ENCODE measurements at regions of chrX and their contacts with region 1.

Region 1: DNA sequence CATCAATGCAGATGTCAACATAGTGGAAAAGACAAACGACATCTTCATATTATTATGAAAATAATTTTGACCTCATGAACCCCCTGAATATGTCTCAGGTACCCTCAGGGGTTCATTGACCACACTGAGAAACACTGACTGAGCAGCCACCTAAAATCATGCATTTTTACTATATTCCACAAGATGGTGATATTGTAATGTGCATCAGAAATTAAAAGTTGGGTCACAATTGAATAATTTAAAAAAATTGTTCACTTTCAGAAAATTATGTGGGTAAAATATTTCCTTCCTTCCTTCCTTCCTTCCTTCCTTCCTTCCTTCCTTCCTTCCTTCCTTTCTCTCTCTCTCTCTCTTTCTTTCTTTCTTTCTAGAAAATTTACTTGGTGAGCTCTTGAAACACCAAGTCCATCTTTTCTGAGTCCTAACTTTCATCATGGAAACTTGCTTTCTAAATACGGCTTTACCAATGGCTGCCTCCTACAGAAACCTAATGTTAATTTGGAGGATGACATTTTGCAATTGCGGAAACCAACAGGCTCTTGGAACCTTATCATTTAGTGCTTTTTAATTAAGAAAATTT is 103.6 kb downstream of the RTL3 start:
- DNase-seq: no peak
- H3K4me3 Mint-ChIP-seq: no peak overlapping the region
- H3K27ac Mint-ChIP-seq: no peak overlapping the region
- H3K4me1 Mint-ChIP-seq: peaks cover 4% of the 10 kb centered on the region
- H3K27me3 Mint-ChIP-seq: no peaks in the 10 kb centered on the region

Region 2: GRCh38 chrX:78527263-78527662 is 28.2 kb before region 1 on chrX:
- CTCF ChIA-PET with region 1: no interaction called
- DNase-seq: no peak
- H3K4me3 Mint-ChIP-seq: no peak overlapping the region
- H3K27ac Mint-ChIP-seq: no peak overlapping the region
- H3K4me1 Mint-ChIP-seq: peaks cover 6% of the 10 kb centered on the region
- H3K27me3 Mint-ChIP-seq: no peaks in the 10 kb centered on the region

Region 3: GRCh38 chrX:78592030-78592429 is 36.5 kb after region 1 on chrX:
- CTCF ChIA-PET with region 1: no interaction called
- DNase-seq: no peak
- H3K4me3 Mint-ChIP-seq: no peak overlapping the region
- H3K27ac Mint-ChIP-seq: no peak overlapping the region
- H3K4me1 Mint-ChIP-seq: peaks cover 3% of the 10 kb centered on the region
- H3K27me3 Mint-ChIP-seq: no peaks in the 10 kb centered on the region

Region 4: DNA sequence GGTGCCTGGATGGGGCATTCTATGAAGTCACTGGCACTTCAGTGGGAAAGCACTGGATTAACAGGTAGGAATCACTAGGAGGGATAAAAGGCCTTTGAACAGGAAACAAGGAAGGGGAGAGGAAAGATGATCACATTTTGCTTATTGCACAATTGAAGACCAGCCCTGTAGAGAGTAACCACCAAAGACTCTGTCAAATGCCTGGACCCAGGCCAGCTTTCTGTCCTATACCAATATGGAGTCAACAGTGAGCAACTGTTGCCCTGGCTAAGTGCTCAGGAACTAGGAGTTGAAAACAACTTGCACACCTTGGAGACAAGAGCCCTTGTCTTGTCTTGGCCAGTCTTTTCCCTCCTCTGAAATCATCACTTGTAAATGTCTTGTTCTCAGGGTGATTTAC is 117.8 kb after region 1 on chrX:
- CTCF ChIA-PET with region 1: no interaction called
- DNase-seq: no peak
- H3K4me3 Mint-ChIP-seq: no peak overlapping the region
- H3K27ac Mint-ChIP-seq: no peak overlapping the region
- H3K4me1 Mint-ChIP-seq: no peaks in the 10 kb centered on the region
- H3K27me3 Mint-ChIP-seq: no peaks in the 10 kb centered on the region

Region 5: DNA sequence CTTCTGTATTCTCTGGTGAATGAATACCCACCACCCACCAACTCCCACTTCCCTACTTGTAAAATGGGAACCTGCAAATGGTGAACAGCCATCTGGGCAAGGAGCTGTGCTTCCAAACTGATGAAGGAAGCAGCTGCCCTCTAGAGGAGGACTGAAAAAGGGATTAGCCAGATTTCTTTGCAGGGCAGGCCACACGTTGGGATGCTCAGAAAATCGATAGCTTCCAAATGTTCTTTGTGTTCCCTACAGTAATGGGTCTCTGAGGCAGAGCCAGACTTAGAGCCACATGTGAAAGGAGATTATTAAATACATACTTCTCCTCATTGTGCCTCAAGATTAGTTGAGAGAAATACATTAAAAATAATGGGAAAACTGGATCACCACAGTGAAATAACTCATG is 152.8 kb after region 1 on chrX:
- CTCF ChIA-PET with region 1: interaction called, 11 read pairs
- DNase-seq: no peak
- H3K4me3 Mint-ChIP-seq: no peak overlapping the region
- H3K27ac Mint-ChIP-seq: no peak overlapping the region
- H3K4me1 Mint-ChIP-seq: no peaks in the 10 kb centered on the region
- H3K27me3 Mint-ChIP-seq: no peaks in the 10 kb centered on the region

Region 6: GRCh38 chrX:79081895-79082512 is 526.5 kb after region 1 on chrX:
- CTCF ChIA-PET with region 1: interaction called, 14 read pairs
- DNase-seq: peak; percentile 39
- H3K4me3 Mint-ChIP-seq: peak overlapping the region; percentile 48
- H3K27ac Mint-ChIP-seq: peak overlapping the region; percentile 73
- H3K4me1 Mint-ChIP-seq: peaks cover 28% of the 10 kb centered on the region
- H3K27me3 Mint-ChIP-seq: no peaks in the 10 kb centered on the region

Region 7: GRCh38 chrX:79412972-79413371 is 857.5 kb after region 1 on chrX:
- CTCF ChIA-PET with region 1: interaction called, 10 read pairs
- DNase-seq: no peak
- H3K4me3 Mint-ChIP-seq: peak overlapping the region; percentile 70
- H3K27ac Mint-ChIP-seq: peak overlapping the region; percentile 11
- H3K4me1 Mint-ChIP-seq: peaks cover 27% of the 10 kb centered on the region
- H3K27me3 Mint-ChIP-seq: no peaks in the 10 kb centered on the region

Measured in activated naive CD4-positive, alpha-beta T cell treated with anti-CD3 and anti-CD28 coated beads, Interleukin-2, amount 10 ng/mL, durations not matched to agents 7 days and 5 days (primary cell).